Right lobe of liver (tissue), 6 donors: ENCODE measurements at regions of chr9 and their contacts with region 1.

Region 1: DNA sequence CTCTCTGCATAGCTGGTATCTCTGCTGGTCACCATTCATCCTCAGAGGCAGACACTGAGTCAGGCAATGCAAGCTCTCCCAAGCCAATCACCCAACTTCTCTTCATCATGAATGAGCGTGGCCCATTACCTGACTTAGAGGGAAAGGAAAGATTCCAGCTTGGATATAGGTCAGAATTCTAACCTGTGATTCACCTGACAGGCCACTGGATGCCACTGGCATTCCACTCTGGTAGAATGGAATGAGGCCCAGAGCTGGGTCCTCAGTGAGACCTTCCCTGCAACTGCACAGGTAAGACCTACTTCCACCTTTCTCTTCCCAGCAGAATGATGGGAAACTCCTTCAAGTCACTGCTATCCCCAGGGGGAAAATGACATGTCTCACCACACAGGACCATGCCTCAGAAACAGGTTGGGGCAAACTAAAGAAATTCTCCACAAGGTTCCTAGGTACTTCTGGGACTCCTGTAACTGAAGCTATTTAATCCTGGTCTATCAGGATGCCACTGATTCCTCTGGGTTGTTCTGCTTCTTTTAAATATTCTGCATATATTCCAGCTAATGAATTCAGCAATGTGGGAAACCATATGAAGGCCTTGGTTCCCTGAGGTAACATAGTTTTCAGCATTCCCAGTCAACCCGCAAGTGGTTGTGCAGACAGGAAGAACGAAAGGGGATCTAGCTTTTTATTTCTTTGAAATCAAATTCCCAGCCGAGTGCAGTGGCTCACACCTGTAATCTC is 62.0 kb downstream of the SUSD1 start:
- DNase-seq: peak in 1 of 3 donors; percentile 60
- ATAC-seq: peak; percentile 81 to 95 (median 85)
- H3K4me3 ChIP-seq: no peak overlapping the region
- H3K27ac ChIP-seq: no peak overlapping the region
- H3K4me1 ChIP-seq: peaks cover 0 to 14% (median 7%) of the 10 kb centered on the region in 4 donors
- H3K27me3 ChIP-seq: no peaks in the 10 kb centered on the region
- CTCF ChIP-seq: peak; percentile 59 to 84 (median 70)
- POLR2A ChIP-seq: no peak

Region 2: GRCh38 chr9:112361601-112362000 is 248.5 kb after region 1 on chr9:
- intact Hi-C with region 1: loop called in 1 of 2 experiments (anchors 10 kb)
- DNase-seq: no peak
- ATAC-seq: peak; percentile 60 to 82 (median 76)
- H3K4me3 ChIP-seq: no peak overlapping the region
- H3K27ac ChIP-seq: no peak overlapping the region
- H3K4me1 ChIP-seq: no peaks in the 10 kb centered on the region
- H3K27me3 ChIP-seq: no peaks in the 10 kb centered on the region
- CTCF ChIP-seq: peak; percentile 61 to 71 (median 64)
- POLR2A ChIP-seq: no peak

Region 3: DNA sequence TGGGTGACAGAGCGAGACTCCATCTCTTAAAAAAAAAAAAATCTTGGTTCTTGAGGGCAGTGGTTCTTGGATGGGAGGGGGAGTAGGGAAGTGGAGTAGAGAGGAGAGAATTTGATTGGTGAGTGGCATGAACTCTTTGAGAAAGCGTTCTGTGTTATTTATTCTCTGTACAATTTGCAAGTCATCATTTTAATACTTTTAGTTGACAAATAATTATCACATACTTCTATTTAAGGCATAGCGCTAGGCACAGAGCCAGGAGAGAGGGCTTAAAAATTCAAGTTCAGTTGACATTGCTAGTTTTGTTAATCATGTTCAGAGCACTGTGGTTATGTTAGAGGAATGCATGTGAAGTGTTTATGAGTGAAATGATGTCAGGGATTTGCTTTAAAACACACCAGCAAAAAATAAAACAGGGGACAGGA is 291.4 kb after region 1 on chr9:
- intact Hi-C with region 1: no loop called
- DNase-seq: no peak
- ATAC-seq: no peak
- H3K4me3 ChIP-seq: no peak overlapping the region
- H3K27ac ChIP-seq: no peak overlapping the region
- H3K4me1 ChIP-seq: peaks cover 0 to 26% (median 1%) of the 10 kb centered on the region in 4 donors
- H3K27me3 ChIP-seq: no peaks in the 10 kb centered on the region
- CTCF ChIP-seq: no peak
- POLR2A ChIP-seq: no peak